Head of caudate nucleus (tissue), 42 donors: ENCODE measurements at regions of chr10 and their contacts with region 1.

Region 1: GRCh38 chr10:51960494-51960895 is 261.1 kb upstream of the CSTF2T start:
- DNase-seq: peak in 10 of 42 donors; percentile 10 to 63 (median 25)

Region 2: GRCh38 chr10:51389415-51390321 is 570.8 kb before region 1 on chr10:
- intact Hi-C with region 1: loop called (anchors 10 kb)
- DNase-seq: peak in 39 of 42 donors; percentile 11 to 81 (median 55)